Activated B cell treated with CpG ODN at 0.5 μM for 24 hours (primary cell): ENCODE measurements at regions of chr14 and their contacts with region 1.

Region 1: GRCh38 chr14:103847451-103848188 is at the start of gene PPP1R13B:
- DNase-seq: peak; percentile 96
- ATAC-seq: peak; percentile 97
- H3K4me3 Mint-ChIP-seq: peak within 1 kb of the TSS; percentile 87
- H3K27ac Mint-ChIP-seq: peak within 1 kb of the TSS; percentile 63
- H3K4me1 Mint-ChIP-seq: peaks cover 12% of the 10 kb centered on the region
- H3K27me3 Mint-ChIP-seq: no peaks in the 10 kb centered on the region
- CTCF ChIP-seq: no peak
- total RNA-seq, gene PPP1R13B: 16.2 and 18.8 TPM in 2 replicates

Region 2: GRCh38 chr14:103085106-103086091 is 762.2 kb before region 1 on chr14:
- CTCF ChIA-PET with region 1: no interaction called
- POLR2A ChIA-PET with region 1: no interaction called
- intact Hi-C with region 1: no loop called
- DNase-seq: no peak
- ATAC-seq: no peak
- H3K4me3 Mint-ChIP-seq: no peak overlapping the region
- H3K27ac Mint-ChIP-seq: no peak overlapping the region
- H3K4me1 Mint-ChIP-seq: no peaks in the 10 kb centered on the region
- H3K27me3 Mint-ChIP-seq: peaks cover 14% of the 10 kb centered on the region
- CTCF ChIP-seq: no peak

Region 3: GRCh38 chr14:103281496-103282231 is 566.0 kb before region 1 on chr14:
- CTCF ChIA-PET with region 1: no interaction called
- POLR2A ChIA-PET with region 1: no interaction called
- intact Hi-C with region 1: no loop called
- DNase-seq: no peak
- ATAC-seq: no peak
- H3K4me3 Mint-ChIP-seq: no peak overlapping the region
- H3K27ac Mint-ChIP-seq: no peak overlapping the region
- H3K4me1 Mint-ChIP-seq: peaks cover 11% of the 10 kb centered on the region
- H3K27me3 Mint-ChIP-seq: peaks cover 69% of the 10 kb centered on the region
- CTCF ChIP-seq: no peak

Region 4: GRCh38 chr14:103562429-103563225 is 285.0 kb before region 1 on chr14 and contains the starts of genes BAG5 and COA8:
- CTCF ChIA-PET with region 1: no interaction called
- POLR2A ChIA-PET with region 1: interaction called, 6 read pairs
- intact Hi-C with region 1: loop called (anchors 10 kb)
- DNase-seq: peak; percentile 89
- ATAC-seq: peak; percentile 79
- H3K4me3 Mint-ChIP-seq: peak within 1 kb of the TSS; percentile 89
- H3K27ac Mint-ChIP-seq: peak within 1 kb of the TSS; percentile 79
- H3K4me1 Mint-ChIP-seq: peaks cover 52% of the 10 kb centered on the region
- H3K27me3 Mint-ChIP-seq: no peaks in the 10 kb centered on the region
- CTCF ChIP-seq: no peak
- total RNA-seq, gene BAG5: 26.9 and 28.8 TPM in 2 replicates
- total RNA-seq, gene COA8: 28.4 and 28.8 TPM in 2 replicates

Region 5: GRCh38 chr14:103746701-103747100 is 100.9 kb before region 1 on chr14:
- CTCF ChIA-PET with region 1: no interaction called
- POLR2A ChIA-PET with region 1: no interaction called
- intact Hi-C with region 1: no loop called
- DNase-seq: no peak
- ATAC-seq: no peak
- H3K4me3 Mint-ChIP-seq: no peak overlapping the region
- H3K27ac Mint-ChIP-seq: no peak overlapping the region
- H3K4me1 Mint-ChIP-seq: no peaks in the 10 kb centered on the region
- H3K27me3 Mint-ChIP-seq: no peaks in the 10 kb centered on the region
- CTCF ChIP-seq: no peak

Region 6: GRCh38 chr14:103871596-103872480 is 24.2 kb after region 1 on chr14:
- CTCF ChIA-PET with region 1: no interaction called
- POLR2A ChIA-PET with region 1: interaction called, 3 read pairs
- intact Hi-C with region 1: loop called (anchors 1 kb)
- DNase-seq: peak; percentile 83
- ATAC-seq: peak; percentile 95
- H3K4me3 Mint-ChIP-seq: peak overlapping the region; percentile 86
- H3K27ac Mint-ChIP-seq: peak overlapping the region; percentile 63
- H3K4me1 Mint-ChIP-seq: peaks cover 9% of the 10 kb centered on the region
- H3K27me3 Mint-ChIP-seq: peaks cover 2% of the 10 kb centered on the region
- CTCF ChIP-seq: no peak

Region 7: DNA sequence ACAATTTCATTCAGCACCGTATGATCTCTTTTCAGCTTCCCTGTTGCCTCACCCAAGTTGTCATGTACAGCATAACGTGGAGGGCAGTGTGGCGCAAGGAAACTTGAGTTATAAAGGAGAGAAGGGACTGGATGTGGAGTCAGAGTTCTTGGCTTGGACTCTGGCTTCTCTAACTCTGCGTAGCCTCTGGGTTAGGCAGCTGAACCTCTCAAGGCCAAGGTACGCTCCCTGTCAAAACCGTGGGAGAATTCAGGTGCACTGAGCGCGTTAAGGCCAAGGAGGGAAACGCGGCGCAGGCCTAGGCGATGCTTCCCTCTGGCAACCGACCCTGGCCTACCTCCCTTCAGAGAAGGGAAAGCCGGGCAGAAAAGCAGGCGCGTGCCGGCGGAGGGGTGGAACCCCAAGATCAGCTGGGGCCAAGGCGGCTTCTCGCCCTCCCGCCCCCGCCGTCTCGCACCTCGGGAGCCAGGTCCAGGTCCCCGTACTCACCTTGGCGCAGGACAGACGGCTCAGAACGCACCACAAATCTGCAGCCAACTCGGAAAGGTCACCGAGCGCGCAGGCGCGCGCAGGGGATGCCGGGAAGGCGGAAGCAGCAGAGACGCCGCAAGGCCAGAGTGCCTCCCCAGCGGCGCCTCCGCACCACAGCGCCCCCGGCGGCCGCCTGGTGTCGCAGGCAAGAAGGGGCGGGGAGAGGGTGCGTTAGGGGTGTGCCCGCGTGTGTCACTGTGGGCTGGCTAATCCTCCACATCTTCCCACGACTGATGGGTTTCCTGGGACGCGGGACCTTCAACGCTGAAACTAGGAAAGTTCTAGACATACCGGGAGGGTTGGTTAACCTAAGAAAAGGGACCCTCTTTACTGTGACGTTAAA is 73.6 kb after region 1 on chr14:
- CTCF ChIA-PET with region 1: no interaction called
- POLR2A ChIA-PET with region 1: interaction called, 14 read pairs
- intact Hi-C with region 1: loop called (anchors 1 kb)
- DNase-seq: peak; percentile 99
- ATAC-seq: peak; percentile 100
- H3K4me3 Mint-ChIP-seq: peak overlapping the region; percentile 91
- H3K27ac Mint-ChIP-seq: peak overlapping the region; percentile 66
- H3K4me1 Mint-ChIP-seq: peaks cover 15% of the 10 kb centered on the region
- H3K27me3 Mint-ChIP-seq: no peaks in the 10 kb centered on the region
- CTCF ChIP-seq: peak; percentile 96

Region 8: GRCh38 chr14:104573930-104574329 is 726.3 kb after region 1 on chr14:
- CTCF ChIA-PET with region 1: no interaction called
- POLR2A ChIA-PET with region 1: no interaction called
- intact Hi-C with region 1: no loop called
- DNase-seq: no peak
- ATAC-seq: no peak
- H3K4me3 Mint-ChIP-seq: no peak overlapping the region
- H3K27ac Mint-ChIP-seq: no peak overlapping the region
- H3K4me1 Mint-ChIP-seq: no peaks in the 10 kb centered on the region
- H3K27me3 Mint-ChIP-seq: peaks cover 3% of the 10 kb centered on the region
- CTCF ChIP-seq: no peak